CD8-positive, alpha-beta T cell (primary cell): ENCODE measurements at regions of chrX and their contacts with region 1.

Region 1: GRCh38 chrX:17736856-17737706 is at the start of gene SCML1:
- DNase-seq: peak; percentile 64 to 90 (median 86)
- ATAC-seq: peak; percentile 62
- H3K4me3 ChIP-seq: peak within 1 kb of the TSS; percentile 51 to 92
- H3K4me3 Mint-ChIP-seq: peak within 1 kb of the TSS; percentile 87
- H3K27ac ChIP-seq: peak within 1 kb of the TSS; percentile 88 to 95
- H3K27ac Mint-ChIP-seq: peak within 1 kb of the TSS; percentile 91
- H3K4me1 ChIP-seq: peaks cover 9% of the 10 kb centered on the region
- H3K4me1 Mint-ChIP-seq: peaks cover 35% of the 10 kb centered on the region
- H3K27me3 ChIP-seq: no peaks in the 10 kb centered on the region
- H3K27me3 Mint-ChIP-seq: no peaks in the 10 kb centered on the region
- CTCF ChIP-seq: no peak
- total RNA-seq, gene SCML1: 50.6 to 52.2 TPM

Region 2: DNA sequence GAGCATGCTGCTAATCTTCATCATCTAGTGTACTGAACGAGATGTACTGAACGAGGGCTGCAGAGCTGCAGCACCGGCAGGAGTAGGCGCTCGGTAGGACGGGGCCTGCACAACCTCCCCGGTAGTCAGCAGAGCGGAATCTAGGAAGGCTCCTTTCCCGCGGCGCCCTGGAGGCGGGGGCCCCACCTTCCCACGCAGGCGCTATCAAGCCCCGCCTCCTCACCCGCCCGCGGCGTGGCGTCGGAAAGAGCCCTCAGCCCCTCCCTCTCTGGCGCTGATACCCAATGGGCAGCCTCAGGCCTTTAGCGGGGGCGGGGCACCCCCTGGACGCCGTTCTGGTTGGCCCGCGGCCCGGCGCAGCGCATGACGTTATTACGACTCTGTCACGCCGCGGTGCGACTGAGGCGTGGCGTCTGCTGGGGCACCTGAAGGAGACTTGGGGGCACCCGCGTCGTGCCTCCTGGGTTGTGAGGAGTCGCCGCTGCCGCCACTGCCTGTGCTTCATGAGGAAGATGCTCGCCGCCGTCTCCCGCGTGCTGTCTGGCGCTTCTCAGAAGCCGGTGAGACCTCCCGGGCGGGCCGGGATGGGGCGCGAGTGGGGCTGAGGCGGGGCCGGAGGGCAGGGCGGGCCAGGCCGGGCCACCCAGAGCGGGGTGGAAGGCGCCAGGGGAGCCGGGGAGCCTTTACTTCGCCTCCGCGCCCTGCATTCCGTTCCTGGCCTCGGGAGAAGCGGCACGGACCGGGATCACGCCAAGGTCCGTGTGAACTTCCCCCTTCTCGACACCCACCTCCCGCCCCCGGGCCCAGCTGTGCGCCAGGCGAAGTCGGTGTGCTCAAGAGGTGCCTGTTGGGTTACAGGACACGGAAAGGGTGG is 1606.7 kb after region 1 on chrX and contains the start of gene PDHA1:
- CTCF ChIA-PET with region 1: no interaction called
- POLR2A ChIA-PET with region 1: no interaction called
- intact Hi-C with region 1: loop called (anchors 5 kb)
- DNase-seq: peak; percentile 83 to 96 (median 92)
- ATAC-seq: peak; percentile 97
- H3K4me3 ChIP-seq: peak within 1 kb of the TSS; percentile 62 to 71
- H3K4me3 Mint-ChIP-seq: peak within 1 kb of the TSS; percentile 86
- H3K27ac ChIP-seq: peak within 1 kb of the TSS; percentile 77 to 82
- H3K27ac Mint-ChIP-seq: peak within 1 kb of the TSS; percentile 92
- H3K4me1 ChIP-seq: peaks cover 15% of the 10 kb centered on the region
- H3K4me1 Mint-ChIP-seq: peaks cover 23% of the 10 kb centered on the region
- H3K27me3 ChIP-seq: no peaks in the 10 kb centered on the region
- H3K27me3 Mint-ChIP-seq: no peaks in the 10 kb centered on the region
- CTCF ChIP-seq: no peak
- total RNA-seq, gene PDHA1: 107 to 115 TPM